ENCODE measurements at regions of chr3 and their contacts with region 1.

Region 1: GRCh38 chr3:17151598-17152373 is 267.0 kb downstream of the PLCL2 start:
- DNase-seq: peak; percentile 97
- H3K4me3 Mint-ChIP-seq: peak overlapping the region; percentile 80
- H3K27ac Mint-ChIP-seq: peak overlapping the region; percentile 93
- H3K4me1 Mint-ChIP-seq: peaks cover 66% of the 10 kb centered on the region
- H3K27me3 Mint-ChIP-seq: no peaks in the 10 kb centered on the region

Region 2: GRCh38 chr3:16828815-16829214 is 323.0 kb before region 1 on chr3:
- intact Hi-C with region 1: loop called (anchors 10 kb)
- DNase-seq: peak; percentile 84
- H3K4me3 Mint-ChIP-seq: no peak overlapping the region
- H3K27ac Mint-ChIP-seq: no peak overlapping the region
- H3K4me1 Mint-ChIP-seq: peaks cover 16% of the 10 kb centered on the region
- H3K27me3 Mint-ChIP-seq: peaks cover 9% of the 10 kb centered on the region

Region 3: DNA sequence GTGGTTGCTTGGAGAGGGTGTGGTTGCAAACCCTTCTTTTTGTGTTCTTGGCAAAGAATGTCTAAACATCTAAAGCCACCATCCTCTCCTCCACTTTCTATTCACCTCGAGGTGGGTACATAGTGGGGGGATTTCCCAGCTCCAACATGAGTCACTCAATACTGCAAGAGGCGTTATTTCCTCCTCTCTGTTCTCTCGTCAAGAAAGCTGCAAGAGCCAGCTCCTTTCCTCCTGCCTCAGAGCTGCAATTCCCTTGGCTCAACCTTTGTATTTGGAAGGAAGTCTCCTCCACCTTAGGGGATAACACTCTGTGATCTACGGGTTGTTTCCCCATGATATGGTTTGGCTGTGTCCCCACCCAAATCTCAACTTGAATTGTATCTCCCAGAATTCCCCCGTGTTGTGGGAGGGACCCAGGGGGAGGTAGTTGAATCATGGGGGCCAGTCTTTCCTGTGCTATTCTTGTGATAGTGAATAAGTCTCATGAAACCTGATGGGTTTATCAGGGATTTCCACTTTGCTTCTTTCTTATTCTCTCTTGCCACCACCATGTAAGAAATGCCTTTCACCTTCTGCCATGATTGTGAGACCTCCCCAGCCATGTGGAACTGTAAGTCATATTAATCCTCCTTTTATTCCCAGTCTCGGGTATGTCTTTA is 128.7 kb before region 1 on chr3:
- intact Hi-C with region 1: loop called (anchors 1 kb)
- DNase-seq: peak; percentile 87
- H3K4me3 Mint-ChIP-seq: peak overlapping the region; percentile 61
- H3K27ac Mint-ChIP-seq: peak overlapping the region; percentile 88
- H3K4me1 Mint-ChIP-seq: peaks cover 52% of the 10 kb centered on the region
- H3K27me3 Mint-ChIP-seq: no peaks in the 10 kb centered on the region

Region 4: DNA sequence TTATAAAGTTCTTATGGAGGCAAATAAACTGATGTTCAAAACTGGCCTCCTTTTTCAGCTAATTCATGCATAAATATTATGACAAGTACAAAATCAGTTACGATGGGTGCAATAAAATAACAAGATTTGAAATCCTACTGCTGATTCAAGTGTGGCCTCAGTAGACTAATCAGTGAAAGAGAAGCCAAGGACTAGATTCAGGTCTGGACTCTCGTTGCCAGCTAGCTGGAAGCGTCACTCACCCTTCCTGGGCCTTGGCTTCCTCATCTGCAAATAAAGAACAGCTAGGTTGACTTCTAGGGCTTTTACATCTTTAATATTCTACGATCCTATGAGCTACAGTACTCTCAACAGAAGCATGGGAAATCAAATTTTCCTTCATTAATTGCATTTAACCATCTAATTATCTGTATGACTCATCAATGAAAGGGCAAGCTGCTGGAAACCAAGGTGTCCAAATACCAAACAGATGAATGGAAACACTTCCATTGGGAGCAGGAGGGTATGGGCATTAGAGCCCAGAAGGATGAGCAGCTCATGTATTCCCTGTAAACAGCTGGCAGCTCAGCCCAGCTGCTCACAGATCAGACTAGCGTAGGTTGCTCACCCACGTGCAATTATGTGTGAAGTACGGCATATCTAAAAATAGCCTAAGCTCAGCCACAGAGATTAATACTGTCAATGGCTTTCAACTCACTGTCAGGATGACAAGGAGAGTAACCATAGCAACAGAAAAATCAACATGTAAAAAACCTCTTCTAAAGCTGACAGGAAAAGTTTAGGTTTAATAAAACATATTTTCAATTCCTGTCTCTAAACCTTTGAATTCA is 27.8 kb after region 1 on chr3:
- intact Hi-C with region 1: loop called (anchors 1 kb)
- DNase-seq: peak; percentile 50
- H3K4me3 Mint-ChIP-seq: no peak overlapping the region
- H3K27ac Mint-ChIP-seq: no peak overlapping the region
- H3K4me1 Mint-ChIP-seq: peaks cover 27% of the 10 kb centered on the region
- H3K27me3 Mint-ChIP-seq: peaks cover 1% of the 10 kb centered on the region

Region 5: DNA sequence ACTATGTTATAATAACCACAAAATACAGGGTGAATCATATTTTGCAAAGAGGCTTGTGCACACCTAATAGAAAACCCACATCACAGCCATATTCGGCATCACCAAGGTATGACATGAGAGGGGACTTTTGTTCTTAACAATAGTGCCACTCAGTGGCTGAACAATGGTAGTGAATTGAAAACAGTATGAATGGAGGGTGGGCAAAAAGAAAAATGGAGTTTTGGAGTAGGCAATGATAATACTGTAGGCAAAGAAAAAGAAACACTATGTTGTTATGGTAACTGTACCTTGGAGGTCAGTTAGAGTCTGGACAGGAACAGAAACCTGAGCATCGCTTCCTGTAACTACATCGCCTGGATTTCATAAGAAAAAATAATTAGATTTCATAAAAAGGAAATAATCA is 81.6 kb after region 1 on chr3:
- intact Hi-C with region 1: loop called (anchors 5 kb)
- DNase-seq: peak; percentile 84
- H3K4me3 Mint-ChIP-seq: no peak overlapping the region
- H3K27ac Mint-ChIP-seq: no peak overlapping the region
- H3K4me1 Mint-ChIP-seq: peaks cover 12% of the 10 kb centered on the region
- H3K27me3 Mint-ChIP-seq: no peaks in the 10 kb centered on the region